Activated T-helper 1 cell treated with anti-CD3 and anti-CD28 coated beads, Interleukin-12 subunit alpha, Interleukin-12 subunit beta, Interleukin-2, Interleukin-4 antibody, amounts not matched to agents 30 ng/mL and 10 ng/mL and 1 ng/mL, durations not matched to agents 14 hours and 24 hours and 36 hours (primary cell): ENCODE measurements at regions of chr1 and their contacts with region 1.

Region 1: GRCh38 chr1:240027059-240027462 is 64.6 kb upstream of the FMN2 start:
- DNase-seq: no peak
- H3K4me3 Mint-ChIP-seq: no peak overlapping the region
- H3K27ac Mint-ChIP-seq: no peak overlapping the region
- H3K4me1 Mint-ChIP-seq: no peaks in the 10 kb centered on the region
- H3K27me3 Mint-ChIP-seq: peaks cover 2% of the 10 kb centered on the region

Region 2: DNA sequence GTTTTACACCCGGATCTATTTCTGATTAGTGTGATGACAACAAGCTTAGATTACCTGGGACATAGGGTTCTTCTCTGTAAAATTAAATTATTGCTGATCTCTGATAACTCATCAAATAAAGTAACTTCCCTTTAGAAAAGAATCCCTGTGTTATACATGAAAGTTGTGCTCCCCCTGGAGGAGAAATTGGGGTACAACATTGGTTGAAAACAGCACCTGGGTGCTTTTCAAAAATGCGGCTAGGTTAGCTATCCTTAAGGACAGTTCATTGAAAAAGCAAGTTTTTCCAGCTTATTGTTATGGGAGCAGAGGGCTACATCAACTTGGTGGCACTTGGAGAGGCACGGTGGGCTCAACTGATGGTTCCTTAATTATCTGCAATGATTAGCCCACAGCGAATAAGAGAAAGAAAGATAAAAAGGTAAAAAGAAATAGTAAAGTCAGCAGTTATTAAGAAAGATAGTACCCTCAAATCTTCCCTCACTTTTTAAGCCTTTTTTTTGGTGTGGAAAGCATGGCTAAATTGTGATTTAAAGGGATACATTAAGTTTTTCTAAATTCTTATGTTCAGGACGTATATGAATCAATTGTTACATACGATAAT is 162.4 kb after region 1 on chr1:
- intact Hi-C with region 1: loop called (anchors 1 kb)
- DNase-seq: peak; percentile 7
- H3K4me3 Mint-ChIP-seq: no peak overlapping the region
- H3K27ac Mint-ChIP-seq: no peak overlapping the region
- H3K4me1 Mint-ChIP-seq: no peaks in the 10 kb centered on the region
- H3K27me3 Mint-ChIP-seq: no peaks in the 10 kb centered on the region